ENCODE measurements at regions of chr15 and their contacts with region 1.

Region 1: GRCh38 chr15:81265944-81266775 is 57.8 kb downstream of the STARD5 start:
- DNase-seq: peak; percentile 71 to 93 (median 83)
- ATAC-seq: peak; percentile 95
- H3K4me3 ChIP-seq: no peak overlapping the region
- H3K4me1 ChIP-seq: peaks cover 6% of the 10 kb centered on the region
- CTCF ChIP-seq: peak; percentile 94

Region 2: GRCh38 chr15:81106560-81106959 is 159.6 kb before region 1 on chr15:
- intact Hi-C with region 1: loop called (anchors 5 to 10 kb)
- DNase-seq: peak in 2 of 3 donors; percentile 28 to 60
- ATAC-seq: peak; percentile 67
- H3K4me3 ChIP-seq: no peak overlapping the region
- H3K4me1 ChIP-seq: no peaks in the 10 kb centered on the region
- CTCF ChIP-seq: peak; percentile 48

Region 3: GRCh38 chr15:81189583-81190283 is 76.4 kb before region 1 on chr15:
- intact Hi-C with region 1: no loop called
- DNase-seq: no peak
- ATAC-seq: peak; percentile 48
- H3K4me3 ChIP-seq: no peak overlapping the region
- H3K4me1 ChIP-seq: no peaks in the 10 kb centered on the region
- CTCF ChIP-seq: no peak

Measured in mucosa of descending colon (tissue), 3 donors.